ENCODE measurements at regions of chr17 and their contacts with region 1.

Region 1: DNA sequence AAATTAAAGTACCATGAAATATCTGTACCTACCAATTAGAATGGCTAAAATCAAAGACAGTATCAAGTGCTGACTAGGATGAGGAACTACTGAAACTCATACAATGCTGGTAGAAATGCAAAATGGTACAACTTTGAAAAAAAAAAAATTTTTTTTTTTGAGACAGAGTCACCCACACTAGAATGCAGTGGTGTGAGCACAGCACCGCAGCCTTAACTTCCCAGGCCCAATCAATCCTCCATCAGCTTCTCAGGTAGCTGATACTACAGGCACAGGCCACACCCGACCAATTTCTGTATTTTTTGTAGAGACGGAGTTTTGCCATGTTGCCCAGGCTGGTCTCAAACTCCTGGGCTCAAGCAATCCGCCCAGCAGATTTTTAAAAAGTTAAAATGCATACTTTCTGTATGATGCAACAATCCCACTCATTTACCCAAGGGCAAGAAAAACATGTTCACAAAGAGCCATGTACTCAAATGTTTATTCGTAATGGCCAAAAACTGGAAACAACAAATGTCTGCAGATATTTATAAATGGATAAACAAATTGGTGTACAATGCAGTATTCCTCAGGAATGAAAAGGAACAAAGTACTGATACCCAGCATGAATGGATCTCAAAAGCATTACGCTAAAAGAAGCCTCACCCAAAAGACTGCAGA is 8.7 kb downstream of the SMURF2 start:
- DNase-seq: no peak
- ATAC-seq: no peak
- H3K4me3 Mint-ChIP-seq: no peak overlapping the region
- H3K27ac Mint-ChIP-seq: peak overlapping the region; percentile 43
- H3K4me1 Mint-ChIP-seq: peaks cover 42% of the 10 kb centered on the region
- H3K27me3 Mint-ChIP-seq: no peaks in the 10 kb centered on the region

Region 2: GRCh38 chr17:63984651-63985386 is 668.6 kb before region 1 on chr17:
- CTCF ChIA-PET with region 1: no interaction called
- POLR2A ChIA-PET with region 1: no interaction called
- intact Hi-C with region 1: no loop called
- DNase-seq: peak; percentile 86
- ATAC-seq: peak; percentile 97
- H3K4me3 Mint-ChIP-seq: peak overlapping the region; percentile 30
- H3K27ac Mint-ChIP-seq: peak overlapping the region; percentile 78
- H3K4me1 Mint-ChIP-seq: peaks cover 23% of the 10 kb centered on the region
- H3K27me3 Mint-ChIP-seq: no peaks in the 10 kb centered on the region

Region 3: DNA sequence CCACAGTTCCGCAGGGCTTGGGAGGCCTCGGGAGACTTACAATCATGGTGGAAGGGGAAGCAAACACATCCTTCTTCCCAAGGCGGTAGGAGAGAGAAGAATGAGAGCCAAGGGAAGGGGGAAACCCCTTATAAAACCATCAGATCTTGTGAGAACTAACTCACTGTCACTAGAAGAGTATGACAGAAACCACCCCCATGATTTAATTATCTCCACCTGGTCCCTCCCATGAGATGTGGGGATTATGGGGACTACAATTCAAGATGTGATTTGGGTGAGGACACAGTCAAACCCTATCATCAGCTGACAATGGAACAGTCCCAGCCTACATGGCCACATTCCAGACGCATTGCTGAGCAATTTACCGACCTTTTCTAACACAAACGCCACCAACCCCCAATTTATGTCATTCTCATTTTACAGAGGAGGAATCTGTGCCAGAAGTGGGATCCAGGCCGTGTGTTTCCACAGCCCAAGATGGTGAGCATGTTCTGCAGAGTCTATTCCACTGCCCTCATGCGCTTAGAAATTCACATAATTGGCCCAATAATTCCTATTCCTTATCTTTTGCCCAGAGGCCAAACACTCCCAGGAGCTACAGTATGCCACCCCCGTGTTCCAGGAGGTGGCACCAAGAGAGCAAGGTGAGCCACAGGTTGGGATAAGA is 187.3 kb before region 1 on chr17:
- CTCF ChIA-PET with region 1: no interaction called
- POLR2A ChIA-PET with region 1: no interaction called
- intact Hi-C with region 1: no loop called
- DNase-seq: no peak
- ATAC-seq: no peak
- H3K4me3 Mint-ChIP-seq: no peak overlapping the region
- H3K27ac Mint-ChIP-seq: no peak overlapping the region
- H3K4me1 Mint-ChIP-seq: no peaks in the 10 kb centered on the region
- H3K27me3 Mint-ChIP-seq: no peaks in the 10 kb centered on the region

Region 4: GRCh38 chr17:64534175-64534574 is 119.3 kb before region 1 on chr17:
- CTCF ChIA-PET with region 1: interaction called, 11 read pairs
- POLR2A ChIA-PET with region 1: no interaction called
- intact Hi-C with region 1: no loop called
- DNase-seq: peak; percentile 18
- ATAC-seq: peak; percentile 37
- H3K4me3 Mint-ChIP-seq: no peak overlapping the region
- H3K27ac Mint-ChIP-seq: peak overlapping the region; percentile 27
- H3K4me1 Mint-ChIP-seq: peaks cover 18% of the 10 kb centered on the region
- H3K27me3 Mint-ChIP-seq: no peaks in the 10 kb centered on the region

Region 5: DNA sequence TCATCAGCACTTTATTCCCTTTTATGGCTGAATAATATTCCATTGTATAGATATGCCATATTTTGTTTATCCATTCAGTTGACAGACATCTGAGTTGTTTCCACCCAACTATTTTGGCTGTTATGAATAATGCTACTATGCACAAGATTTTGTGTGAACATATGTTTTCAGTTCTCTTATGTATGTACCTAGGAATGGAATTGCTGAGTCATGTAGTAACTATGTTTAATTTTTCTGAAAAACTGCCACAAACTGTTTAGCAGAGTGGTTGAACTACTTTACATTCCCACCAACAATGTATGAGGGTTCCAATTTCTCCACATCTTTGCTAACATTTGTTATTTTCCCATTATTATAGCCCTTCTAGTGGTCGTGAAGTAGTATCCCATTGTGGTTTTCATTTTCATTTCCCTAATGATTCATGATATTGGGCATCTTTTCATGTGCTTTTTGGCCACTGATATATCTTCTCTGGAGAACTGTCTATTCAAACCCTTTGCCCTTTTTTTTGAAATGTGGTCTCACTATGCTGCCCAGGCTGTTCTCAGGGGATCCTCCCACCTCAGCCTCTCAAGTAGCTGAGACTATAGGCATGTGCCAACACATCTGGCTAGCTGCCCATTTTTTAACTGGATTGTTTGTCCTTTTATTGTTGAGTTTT is 17.7 kb before region 1 on chr17:
- CTCF ChIA-PET with region 1: interaction called, 7 read pairs
- POLR2A ChIA-PET with region 1: no interaction called
- intact Hi-C with region 1: loop called in 1 of 2 experiments (anchors 1 kb)
- DNase-seq: peak; percentile 29
- ATAC-seq: peak; percentile 79
- H3K4me3 Mint-ChIP-seq: no peak overlapping the region
- H3K27ac Mint-ChIP-seq: peak overlapping the region; percentile 79
- H3K4me1 Mint-ChIP-seq: peaks cover 54% of the 10 kb centered on the region
- H3K27me3 Mint-ChIP-seq: no peaks in the 10 kb centered on the region

Region 6: GRCh38 chr17:64747938-64748540 is 94.6 kb after region 1 on chr17:
- CTCF ChIA-PET with region 1: no interaction called
- POLR2A ChIA-PET with region 1: no interaction called
- intact Hi-C with region 1: no loop called
- DNase-seq: no peak
- ATAC-seq: no peak
- H3K4me3 Mint-ChIP-seq: no peak overlapping the region
- H3K27ac Mint-ChIP-seq: no peak overlapping the region
- H3K4me1 Mint-ChIP-seq: no peaks in the 10 kb centered on the region
- H3K27me3 Mint-ChIP-seq: no peaks in the 10 kb centered on the region

Region 7: GRCh38 chr17:65173284-65173793 is 519.9 kb after region 1 on chr17:
- CTCF ChIA-PET with region 1: no interaction called
- POLR2A ChIA-PET with region 1: no interaction called
- intact Hi-C with region 1: no loop called
- DNase-seq: peak; percentile 79
- ATAC-seq: peak; percentile 91
- H3K4me3 Mint-ChIP-seq: no peak overlapping the region
- H3K27ac Mint-ChIP-seq: peak overlapping the region; percentile 71
- H3K4me1 Mint-ChIP-seq: peaks cover 21% of the 10 kb centered on the region
- H3K27me3 Mint-ChIP-seq: no peaks in the 10 kb centered on the region